Activated CD4-positive, alpha-beta memory T cell treated with anti-CD3 and anti-CD28 coated beads for 36 hours (primary cell): ENCODE measurements at regions of chr14 and their contacts with region 1.

Region 1: GRCh38 chr14:39232554-39233415 is 930 bp upstream of the MIA2 start:
- DNase-seq: no peak
- H3K4me3 Mint-ChIP-seq: no peak overlapping the region
- H3K27ac Mint-ChIP-seq: peak overlapping the region; percentile 23
- H3K4me1 Mint-ChIP-seq: peaks cover 43% of the 10 kb centered on the region
- H3K27me3 Mint-ChIP-seq: no peaks in the 10 kb centered on the region

Region 2: GRCh38 chr14:37340355-37340754 is 1892.4 kb before region 1 on chr14:
- CTCF ChIA-PET with region 1: no interaction called
- POLR2A ChIA-PET with region 1: no interaction called
- intact Hi-C with region 1: no loop called
- DNase-seq: no peak
- H3K4me3 Mint-ChIP-seq: no peak overlapping the region
- H3K27ac Mint-ChIP-seq: no peak overlapping the region
- H3K4me1 Mint-ChIP-seq: no peaks in the 10 kb centered on the region
- H3K27me3 Mint-ChIP-seq: no peaks in the 10 kb centered on the region

Region 3: DNA sequence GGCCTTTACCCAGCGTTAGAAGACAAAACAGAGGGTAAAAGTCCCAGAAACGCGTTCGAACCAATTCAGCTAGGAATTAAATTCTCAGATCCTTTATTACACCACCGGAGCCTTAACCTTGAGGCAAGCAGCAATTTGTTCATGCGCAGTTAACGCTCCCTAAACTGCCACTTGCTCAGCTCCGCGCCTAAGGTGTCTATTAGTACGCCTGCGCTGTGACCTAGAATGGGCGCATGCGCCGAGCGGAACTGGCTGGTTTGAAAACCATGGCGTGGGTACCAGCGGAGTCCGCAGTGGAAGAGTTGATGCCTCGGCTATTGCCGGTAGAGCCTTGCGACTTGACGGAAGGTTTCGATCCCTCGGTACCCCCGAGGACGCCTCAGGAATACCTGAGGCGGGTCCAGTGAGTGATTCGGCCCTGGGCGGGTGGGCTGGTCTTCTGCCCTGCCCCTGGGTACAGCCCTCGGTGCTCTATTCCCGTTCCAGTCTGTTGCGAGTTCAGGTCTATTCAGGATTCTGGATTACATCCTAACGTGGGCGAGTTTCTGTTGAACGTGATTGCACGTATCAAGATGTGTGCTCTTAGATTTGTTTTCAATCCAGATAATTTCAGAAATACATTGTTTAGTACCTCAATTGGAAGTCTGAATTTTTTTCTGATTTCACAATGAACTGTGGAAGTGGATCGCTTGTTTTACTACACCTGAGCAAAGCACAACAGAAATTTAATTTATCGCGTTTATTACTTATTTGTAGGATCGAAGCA is 118.5 kb before region 1 on chr14 and contains the start of gene GEMIN2:
- CTCF ChIA-PET with region 1: no interaction called
- POLR2A ChIA-PET with region 1: no interaction called
- intact Hi-C with region 1: loop called (anchors 1 kb)
- DNase-seq: peak; percentile 97
- H3K4me3 Mint-ChIP-seq: peak within 1 kb of the TSS; percentile 97
- H3K27ac Mint-ChIP-seq: peak within 1 kb of the TSS; percentile 93
- H3K4me1 Mint-ChIP-seq: peaks cover 18% of the 10 kb centered on the region
- H3K27me3 Mint-ChIP-seq: no peaks in the 10 kb centered on the region
- total RNA-seq, gene GEMIN2: 17.2 to 18.8 TPM

Region 4: GRCh38 chr14:39266871-39267591 is 34.2 kb after region 1 on chr14:
- CTCF ChIA-PET with region 1: interaction called, 4 read pairs
- POLR2A ChIA-PET with region 1: interaction called, 16 read pairs
- intact Hi-C with region 1: loop called (anchors 1 kb)
- DNase-seq: peak; percentile 79
- H3K4me3 Mint-ChIP-seq: peak overlapping the region; percentile 84
- H3K27ac Mint-ChIP-seq: peak overlapping the region; percentile 90
- H3K4me1 Mint-ChIP-seq: peaks cover 46% of the 10 kb centered on the region
- H3K27me3 Mint-ChIP-seq: no peaks in the 10 kb centered on the region

Region 5: DNA sequence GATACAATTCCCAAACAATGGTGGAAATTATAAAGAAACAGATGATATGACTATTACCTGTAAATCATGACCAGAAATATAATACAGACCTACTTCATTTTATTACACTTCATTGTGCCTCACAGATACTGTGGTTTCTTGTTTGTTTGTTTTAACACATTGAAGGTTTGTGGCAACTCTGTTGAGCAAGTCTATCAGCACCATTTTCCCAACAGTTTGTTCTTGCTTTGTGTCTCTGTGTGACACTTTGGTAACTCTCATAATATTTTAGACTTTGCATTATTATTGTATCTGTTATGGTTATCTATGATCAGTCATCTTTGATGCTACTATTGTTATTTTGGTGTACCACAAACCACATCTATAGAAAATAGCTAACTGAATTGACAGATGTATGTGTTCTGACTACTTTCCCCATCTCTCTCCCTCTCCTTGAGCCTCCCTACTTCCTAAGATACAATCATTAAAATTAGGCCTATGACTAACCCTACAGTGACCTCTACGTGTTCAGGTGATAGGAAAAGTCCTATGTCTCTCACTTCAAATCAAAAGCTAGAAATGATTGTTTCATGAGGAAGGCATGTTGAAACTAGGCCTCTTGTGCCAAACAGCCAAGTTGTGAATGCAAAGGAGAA is 150.4 kb after region 1 on chr14:
- CTCF ChIA-PET with region 1: no interaction called
- POLR2A ChIA-PET with region 1: no interaction called
- intact Hi-C with region 1: loop called (anchors 1 kb)
- DNase-seq: no peak
- H3K4me3 Mint-ChIP-seq: no peak overlapping the region
- H3K27ac Mint-ChIP-seq: no peak overlapping the region
- H3K4me1 Mint-ChIP-seq: peaks cover 24% of the 10 kb centered on the region
- H3K27me3 Mint-ChIP-seq: no peaks in the 10 kb centered on the region

Region 6: DNA sequence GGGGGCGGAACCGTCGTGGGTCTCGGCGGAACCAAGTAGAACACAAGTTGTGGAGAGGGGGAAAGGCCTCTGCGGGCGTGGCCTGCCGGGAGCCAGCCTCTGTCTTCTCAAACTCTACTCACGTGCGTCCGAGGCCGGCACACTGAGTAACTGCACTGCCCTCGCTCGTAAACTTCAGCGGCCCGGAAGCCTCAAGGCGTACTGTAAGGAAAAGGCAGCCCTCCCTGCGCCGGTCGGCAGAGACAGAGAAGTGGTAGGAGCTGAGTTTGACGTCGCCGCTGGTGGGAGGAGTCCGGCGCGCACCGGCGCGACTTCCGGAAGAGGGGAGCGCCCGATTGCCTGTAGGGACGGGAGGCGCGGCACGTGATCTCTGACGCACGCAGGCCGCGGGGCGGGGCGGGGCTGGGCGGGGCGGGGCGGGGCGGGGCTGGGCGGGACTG is 199.4 kb after region 1 on chr14 and contains the start of gene FBXO33:
- CTCF ChIA-PET with region 1: interaction called, 13 read pairs
- POLR2A ChIA-PET with region 1: interaction called, 14 read pairs
- intact Hi-C with region 1: loop called (anchors 1 kb)
- DNase-seq: peak; percentile 98
- H3K4me3 Mint-ChIP-seq: peak within 1 kb of the TSS; percentile 99
- H3K27ac Mint-ChIP-seq: peak within 1 kb of the TSS; percentile 100
- H3K4me1 Mint-ChIP-seq: peaks cover 36% of the 10 kb centered on the region
- H3K27me3 Mint-ChIP-seq: no peaks in the 10 kb centered on the region
- total RNA-seq, gene FBXO33: 17.4 to 18.8 TPM

Region 7: GRCh38 chr14:39469094-39469710 is 236.4 kb after region 1 on chr14:
- CTCF ChIA-PET with region 1: interaction called, 14 read pairs
- POLR2A ChIA-PET with region 1: no interaction called
- intact Hi-C with region 1: loop called (anchors 1 kb)
- DNase-seq: peak; percentile 55
- H3K4me3 Mint-ChIP-seq: no peak overlapping the region
- H3K27ac Mint-ChIP-seq: no peak overlapping the region
- H3K4me1 Mint-ChIP-seq: no peaks in the 10 kb centered on the region
- H3K27me3 Mint-ChIP-seq: peaks cover 4% of the 10 kb centered on the region